SK-N-SH (cell line): ENCODE measurements at regions of chr19 and their contacts with region 1.

Region 1: DNA sequence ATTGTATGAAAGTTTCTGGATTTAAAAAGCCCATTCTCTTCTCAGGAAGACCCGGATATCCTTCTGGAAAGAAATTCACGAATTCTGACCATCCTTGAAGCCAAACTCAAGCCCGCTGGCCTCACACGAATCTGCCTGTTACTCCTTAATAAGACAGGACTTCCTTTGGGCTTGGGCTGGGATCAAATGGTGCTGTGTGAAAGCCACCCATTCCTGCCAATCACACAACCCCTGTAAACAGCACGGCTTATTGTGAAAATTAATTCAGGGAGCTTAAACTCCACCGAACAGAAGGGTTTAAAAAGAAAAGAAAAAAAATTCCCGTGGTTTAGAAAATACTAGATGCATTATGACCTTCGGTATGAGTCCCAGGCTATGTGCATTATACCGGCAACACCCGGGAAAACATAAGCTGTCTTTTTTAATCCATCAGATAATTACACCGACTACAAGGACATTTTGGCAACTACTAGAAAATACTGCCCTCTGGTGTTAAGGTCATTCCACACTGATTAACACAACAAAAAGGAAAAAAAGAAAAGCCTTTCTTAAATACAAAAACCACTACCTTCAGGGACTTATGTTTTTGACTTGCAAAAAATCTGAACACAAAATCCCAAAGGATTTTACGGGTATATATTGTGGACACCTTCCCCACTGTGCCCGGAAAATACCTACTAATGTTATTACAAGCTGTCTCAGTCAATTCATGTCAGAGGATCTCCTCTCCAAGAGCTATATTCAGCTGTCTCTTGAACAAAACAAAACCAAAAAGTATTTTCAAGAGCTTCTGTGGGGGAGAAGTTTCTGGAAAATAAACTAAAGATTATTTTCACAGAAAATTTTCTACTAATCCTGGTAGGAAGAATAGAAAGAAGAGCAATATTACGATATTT is 76.0 kb upstream of the LSM14A start:
- DNase-seq: peak; percentile 72
- H3K4me3 ChIP-seq: peak overlapping the region; percentile 3 to 12; a peak in 2 of 4 replicates
- H3K27ac ChIP-seq: no peak overlapping the region
- H3K4me1 ChIP-seq: no peaks in the 10 kb centered on the region
- H3K27me3 ChIP-seq: no peaks in the 10 kb centered on the region
- CTCF ChIP-seq: peak; percentile 74
- EP300 ChIP-seq: no peak
- RAD21 ChIP-seq: peak; percentile 91

Region 2: GRCh38 chr19:33785795-33786194 is 310.5 kb before region 1 on chr19:
- CTCF ChIA-PET with region 1: interaction called, 74 read pairs
- POLR2A ChIA-PET with region 1: no interaction called
- DNase-seq: no peak
- H3K4me3 ChIP-seq: no peak overlapping the region
- H3K27ac ChIP-seq: no peak overlapping the region
- H3K4me1 ChIP-seq: no peaks in the 10 kb centered on the region
- H3K27me3 ChIP-seq: no peaks in the 10 kb centered on the region
- CTCF ChIP-seq: no peak
- EP300 ChIP-seq: no peak
- RAD21 ChIP-seq: no peak

Region 3: GRCh38 chr19:34034318-34034846 is 61.9 kb before region 1 on chr19:
- CTCF ChIA-PET with region 1: interaction called, 16 read pairs
- POLR2A ChIA-PET with region 1: no interaction called
- DNase-seq: no peak
- H3K4me3 ChIP-seq: no peak overlapping the region
- H3K27ac ChIP-seq: no peak overlapping the region
- H3K4me1 ChIP-seq: no peaks in the 10 kb centered on the region
- H3K27me3 ChIP-seq: no peaks in the 10 kb centered on the region
- CTCF ChIP-seq: no peak
- EP300 ChIP-seq: no peak
- RAD21 ChIP-seq: no peak

Region 4: GRCh38 chr19:34067861-34068271 is 28.4 kb before region 1 on chr19:
- CTCF ChIA-PET with region 1: interaction called, 12 read pairs
- POLR2A ChIA-PET with region 1: no interaction called
- DNase-seq: no peak
- H3K4me3 ChIP-seq: no peak overlapping the region
- H3K27ac ChIP-seq: no peak overlapping the region
- H3K4me1 ChIP-seq: no peaks in the 10 kb centered on the region
- H3K27me3 ChIP-seq: no peaks in the 10 kb centered on the region; the same call in 1 of the 2 replicates
- CTCF ChIP-seq: no peak
- EP300 ChIP-seq: no peak
- RAD21 ChIP-seq: no peak

Region 5: DNA sequence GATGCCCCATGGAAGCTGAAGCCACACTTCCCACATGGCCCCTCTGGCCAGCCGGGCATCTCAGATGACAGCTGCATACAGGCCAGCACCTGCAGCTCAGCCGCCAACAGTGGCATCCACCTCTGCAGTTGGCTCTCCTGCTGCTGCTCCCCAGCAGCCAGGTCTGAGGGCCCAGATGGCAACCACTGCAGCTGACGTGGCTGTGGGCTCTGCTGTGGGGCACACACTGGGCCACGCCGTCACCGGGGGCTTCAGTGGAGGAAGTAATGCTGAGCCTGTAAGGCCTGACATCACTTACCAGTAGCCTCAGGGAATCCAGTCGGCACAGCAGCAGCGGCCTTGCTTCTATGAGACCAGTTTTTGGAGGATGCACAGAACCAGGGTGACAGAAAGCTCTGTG is 30.7 kb after region 1 on chr19:
- CTCF ChIA-PET with region 1: interaction called, 18 read pairs
- POLR2A ChIA-PET with region 1: no interaction called
- DNase-seq: peak; percentile 22
- H3K4me3 ChIP-seq: no peak overlapping the region
- H3K27ac ChIP-seq: no peak overlapping the region
- H3K4me1 ChIP-seq: peaks cover 0 to 3% of the 10 kb centered on the region in 2 experiments; a peak in 1 of 4 replicates
- H3K27me3 ChIP-seq: no peaks in the 10 kb centered on the region
- CTCF ChIP-seq: no peak
- EP300 ChIP-seq: no peak
- RAD21 ChIP-seq: no peak

Region 6: GRCh38 chr19:34188408-34188807 is 92.1 kb after region 1 on chr19:
- CTCF ChIA-PET with region 1: no interaction called
- POLR2A ChIA-PET with region 1: no interaction called
- DNase-seq: no peak
- H3K4me3 ChIP-seq: no peak overlapping the region
- H3K27ac ChIP-seq: no peak overlapping the region
- H3K4me1 ChIP-seq: peaks cover 4 to 23% of the 10 kb centered on the region in 2 experiments; a peak in 3 of 4 replicates
- H3K27me3 ChIP-seq: no peaks in the 10 kb centered on the region
- CTCF ChIP-seq: no peak
- EP300 ChIP-seq: no peak
- RAD21 ChIP-seq: no peak

Region 7: DNA sequence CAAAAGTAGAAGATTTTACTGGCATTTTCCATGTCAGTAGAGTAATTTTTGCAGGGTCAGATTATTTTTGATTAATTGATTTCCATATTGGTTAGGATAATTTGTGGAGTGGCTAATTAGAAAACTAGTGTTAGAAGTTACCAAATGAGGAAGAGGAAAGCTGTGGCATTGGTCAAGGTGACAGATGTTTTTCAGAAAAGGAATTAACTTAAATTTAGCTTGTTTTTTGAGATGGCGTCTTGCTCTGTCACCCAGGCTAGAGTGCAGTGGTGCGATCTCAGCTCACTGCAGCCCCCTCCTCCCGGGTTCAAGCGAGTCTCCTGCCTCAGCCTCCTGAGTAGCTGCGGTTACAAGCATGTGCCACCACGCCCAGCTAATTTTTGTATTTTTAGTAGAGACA is 104.9 kb after region 1 on chr19:
- CTCF ChIA-PET with region 1: no interaction called
- POLR2A ChIA-PET with region 1: no interaction called
- DNase-seq: no peak
- H3K4me3 ChIP-seq: no peak overlapping the region
- H3K27ac ChIP-seq: no peak overlapping the region
- H3K4me1 ChIP-seq: 0 out of 4 replicates have a peak, but pooled peaks cover 0 to 5% of the 10 kb centered on the region in 2 experiments
- H3K27me3 ChIP-seq: no peaks in the 10 kb centered on the region
- CTCF ChIP-seq: no peak
- EP300 ChIP-seq: no peak
- RAD21 ChIP-seq: no peak